ENCODE measurements at regions of chr3 and their contacts with region 1.

Region 1: GRCh38 chr3:156030723-156031122 is 89.7 kb upstream of the KCNAB1 start:
- DNase-seq: no peak
- ATAC-seq: no peak
- H3K4me3 ChIP-seq: no peak overlapping the region
- H3K27ac ChIP-seq: no peak overlapping the region
- H3K4me1 ChIP-seq: no peaks in the 10 kb centered on the region
- CTCF ChIP-seq: no peak
- EP300 ChIP-seq: no peak
- POLR2A ChIP-seq: no peak
- RAD21 ChIP-seq: no peak

Region 2: DNA sequence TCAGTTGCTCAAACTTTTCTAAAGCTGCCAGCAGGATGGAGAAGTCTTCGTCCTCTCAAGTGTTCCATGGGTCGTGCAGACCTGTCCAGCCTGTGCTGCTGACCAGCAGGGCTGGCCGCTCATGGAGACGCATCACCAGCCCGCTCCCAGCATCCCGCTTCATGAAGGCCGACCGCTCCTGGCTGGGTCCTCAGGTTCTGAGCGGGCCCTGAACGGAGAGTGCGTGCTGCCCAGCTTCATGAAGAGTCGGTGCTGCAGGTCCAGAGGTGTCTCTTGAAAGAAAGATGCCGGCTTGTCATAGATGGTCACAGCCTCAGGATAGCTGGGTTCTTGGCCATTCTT is 13.9 kb after region 1 on chr3:
- CTCF ChIA-PET with region 1: interaction called, 14 read pairs
- POLR2A ChIA-PET with region 1: no interaction called
- DNase-seq: no peak
- ATAC-seq: peak in 1 of 2 experiments; percentile 31; a peak in 3 of 6 replicates
- H3K4me3 ChIP-seq: no peak overlapping the region
- H3K27ac ChIP-seq: no peak overlapping the region
- H3K4me1 ChIP-seq: no peaks in the 10 kb centered on the region
- CTCF ChIP-seq: no peak
- EP300 ChIP-seq: no peak
- POLR2A ChIP-seq: no peak
- RAD21 ChIP-seq: no peak